ENCODE measurements at regions of chr13 and their contacts with region 1.

Region 1: DNA sequence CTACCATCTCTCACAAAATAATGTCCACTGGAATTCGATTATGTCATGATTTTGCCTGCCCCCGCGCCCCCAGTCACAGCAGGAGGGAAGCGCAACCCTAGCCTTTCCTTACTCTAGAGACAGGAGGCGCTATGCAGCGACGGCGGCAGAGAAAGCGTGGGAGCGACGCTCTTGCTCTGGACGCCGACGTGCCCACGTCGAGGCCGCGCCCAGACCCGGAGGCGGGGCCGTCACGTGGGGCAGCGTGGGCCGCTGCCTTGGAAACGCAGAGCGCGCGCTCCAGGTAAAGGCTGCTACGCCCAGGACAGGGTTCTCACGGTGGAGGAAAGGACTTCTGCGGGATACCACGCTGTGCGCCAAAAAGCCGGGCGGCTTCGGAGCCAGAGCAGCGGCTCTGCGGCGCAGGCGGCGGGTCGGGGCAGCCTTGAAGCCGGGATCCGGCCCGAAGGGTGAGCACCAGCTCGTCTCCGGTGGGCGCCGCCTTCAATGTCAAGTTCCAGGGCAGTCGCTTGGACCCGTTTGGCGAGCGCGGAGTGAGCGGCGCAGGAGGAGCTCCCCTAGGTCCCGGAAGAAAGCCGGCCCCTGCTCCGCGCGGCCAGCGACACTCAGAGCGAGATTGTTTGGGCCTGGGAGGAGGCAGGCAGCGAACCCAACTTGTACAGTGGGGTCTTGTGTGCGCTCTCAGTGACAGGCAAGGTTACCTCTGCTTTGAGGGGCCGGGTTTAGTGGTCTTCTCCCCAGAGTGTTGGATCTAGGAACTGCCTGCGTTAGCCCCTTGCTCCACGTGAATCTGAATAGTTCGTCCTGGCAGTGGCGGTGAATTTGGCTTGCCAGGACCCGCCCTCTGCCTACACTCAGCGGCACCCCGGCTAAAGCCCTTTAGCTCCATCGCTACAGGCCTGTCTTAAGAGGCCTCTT is 121.7 kb downstream of the MRPL57 start:
- DNase-seq: peak; percentile 91
- H3K4me3 Mint-ChIP-seq: peak overlapping the region; percentile 87
- H3K27ac Mint-ChIP-seq: peak overlapping the region; percentile 59
- H3K4me1 Mint-ChIP-seq: peaks cover 25% of the 10 kb centered on the region
- H3K27me3 Mint-ChIP-seq: no peaks in the 10 kb centered on the region

Region 2: GRCh38 chr13:21115231-21115630 is 182.9 kb before region 1 on chr13:
- CTCF ChIA-PET with region 1: no interaction called
- POLR2A ChIA-PET with region 1: no interaction called
- intact Hi-C with region 1: loop called (anchors 10 kb)
- DNase-seq: no peak
- H3K4me3 Mint-ChIP-seq: no peak overlapping the region
- H3K27ac Mint-ChIP-seq: no peak overlapping the region
- H3K4me1 Mint-ChIP-seq: no peaks in the 10 kb centered on the region
- H3K27me3 Mint-ChIP-seq: no peaks in the 10 kb centered on the region

Region 3: DNA sequence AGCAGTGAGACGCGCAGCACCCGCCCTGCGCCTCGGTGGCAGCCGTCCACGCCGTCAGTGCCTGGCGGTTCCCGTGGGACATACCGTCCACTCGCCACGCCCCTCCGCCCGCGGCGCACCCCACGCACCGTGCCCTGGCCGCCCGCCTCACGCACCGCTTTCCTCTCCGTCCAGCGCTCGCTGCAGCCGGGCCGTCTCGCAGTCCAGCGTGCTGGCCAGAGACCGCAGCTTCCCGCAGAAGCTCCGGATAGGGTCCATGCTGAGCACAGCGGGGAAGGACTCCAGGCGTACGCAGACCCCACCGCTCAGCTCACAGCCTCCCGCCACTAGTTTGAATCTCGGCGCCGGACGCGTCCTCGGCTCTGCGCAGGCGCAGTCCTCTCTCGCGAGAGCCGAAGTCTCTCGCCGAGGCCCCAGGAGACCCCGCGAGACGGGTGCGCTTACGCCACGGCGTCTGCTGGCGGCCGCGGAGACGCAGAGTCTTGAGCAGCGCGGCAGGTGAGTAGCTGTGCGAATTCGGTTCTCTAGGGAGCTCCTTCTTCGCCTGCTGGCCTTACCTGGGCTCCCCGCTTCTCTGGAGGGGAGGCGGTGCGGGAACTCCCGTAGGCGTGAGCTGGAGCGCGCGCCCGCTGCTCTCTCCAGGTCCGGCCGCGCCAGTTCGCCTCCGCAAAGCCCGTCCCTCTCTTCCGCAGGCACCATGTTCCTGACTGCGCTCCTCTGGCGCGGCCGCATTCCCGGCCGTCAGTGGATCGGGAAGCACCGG is 121.8 kb before region 1 on chr13 and contains the starts of genes MRPL57 and SKA3:
- CTCF ChIA-PET with region 1: interaction called, 9 read pairs
- POLR2A ChIA-PET with region 1: no interaction called
- intact Hi-C with region 1: loop called (anchors 1 kb)
- DNase-seq: peak; percentile 96
- H3K4me3 Mint-ChIP-seq: peak within 1 kb of the TSS; percentile 99
- H3K27ac Mint-ChIP-seq: peak within 1 kb of the TSS; percentile 96
- H3K4me1 Mint-ChIP-seq: peaks cover 18% of the 10 kb centered on the region
- H3K27me3 Mint-ChIP-seq: no peaks in the 10 kb centered on the region
- total RNA-seq, gene MRPL57: 20.8 to 23.1 TPM
- total RNA-seq, gene SKA3: 34.0 to 36.2 TPM

Region 4: DNA sequence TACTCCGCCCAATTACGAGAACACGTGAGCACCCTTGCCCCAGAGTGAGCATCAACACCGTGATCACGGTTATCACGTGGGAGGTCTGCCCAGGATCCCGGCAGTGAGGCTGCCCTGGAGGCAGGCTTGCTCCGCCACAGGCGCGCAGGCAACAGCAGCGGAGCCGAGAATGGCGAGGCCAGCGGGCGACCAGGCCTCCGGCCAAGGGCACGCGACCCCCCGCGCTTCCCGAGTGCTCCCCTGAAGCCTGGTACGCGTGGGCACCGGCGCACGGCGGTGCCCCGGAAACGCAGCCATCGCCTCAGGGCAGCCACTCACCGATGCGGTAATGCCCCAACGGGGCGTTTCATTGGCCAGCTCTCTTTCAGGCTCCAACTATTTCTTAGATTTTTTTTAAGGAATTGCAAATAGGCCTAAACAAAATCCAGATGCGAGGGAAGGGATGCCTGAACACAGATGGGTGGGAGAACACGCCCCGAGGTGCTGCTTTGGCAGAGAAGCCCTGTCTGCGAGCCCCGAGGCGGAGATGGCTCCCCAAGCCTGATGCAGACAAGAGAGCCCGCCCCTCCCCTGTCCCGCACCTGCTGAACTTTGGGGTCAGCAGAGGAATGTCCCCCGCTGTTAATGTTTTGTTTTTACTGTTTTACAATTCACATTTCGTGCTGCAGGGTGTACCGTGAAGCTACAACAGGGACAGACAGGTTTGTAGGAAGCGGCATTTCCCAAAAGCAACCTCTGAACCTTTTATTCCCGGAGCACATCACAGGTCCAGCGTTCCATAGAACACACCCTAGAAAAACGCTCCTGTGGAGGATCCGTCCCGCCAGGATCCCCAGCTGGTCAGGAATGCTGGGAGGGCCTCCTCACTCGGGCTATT is 28.2 kb after region 1 on chr13:
- CTCF ChIA-PET with region 1: interaction called, 20 read pairs
- POLR2A ChIA-PET with region 1: no interaction called
- intact Hi-C with region 1: loop called (anchors 1 kb)
- DNase-seq: peak; percentile 40
- H3K4me3 Mint-ChIP-seq: peak overlapping the region; percentile 44
- H3K27ac Mint-ChIP-seq: no peak overlapping the region
- H3K4me1 Mint-ChIP-seq: peaks cover 43% of the 10 kb centered on the region
- H3K27me3 Mint-ChIP-seq: no peaks in the 10 kb centered on the region

Region 5: DNA sequence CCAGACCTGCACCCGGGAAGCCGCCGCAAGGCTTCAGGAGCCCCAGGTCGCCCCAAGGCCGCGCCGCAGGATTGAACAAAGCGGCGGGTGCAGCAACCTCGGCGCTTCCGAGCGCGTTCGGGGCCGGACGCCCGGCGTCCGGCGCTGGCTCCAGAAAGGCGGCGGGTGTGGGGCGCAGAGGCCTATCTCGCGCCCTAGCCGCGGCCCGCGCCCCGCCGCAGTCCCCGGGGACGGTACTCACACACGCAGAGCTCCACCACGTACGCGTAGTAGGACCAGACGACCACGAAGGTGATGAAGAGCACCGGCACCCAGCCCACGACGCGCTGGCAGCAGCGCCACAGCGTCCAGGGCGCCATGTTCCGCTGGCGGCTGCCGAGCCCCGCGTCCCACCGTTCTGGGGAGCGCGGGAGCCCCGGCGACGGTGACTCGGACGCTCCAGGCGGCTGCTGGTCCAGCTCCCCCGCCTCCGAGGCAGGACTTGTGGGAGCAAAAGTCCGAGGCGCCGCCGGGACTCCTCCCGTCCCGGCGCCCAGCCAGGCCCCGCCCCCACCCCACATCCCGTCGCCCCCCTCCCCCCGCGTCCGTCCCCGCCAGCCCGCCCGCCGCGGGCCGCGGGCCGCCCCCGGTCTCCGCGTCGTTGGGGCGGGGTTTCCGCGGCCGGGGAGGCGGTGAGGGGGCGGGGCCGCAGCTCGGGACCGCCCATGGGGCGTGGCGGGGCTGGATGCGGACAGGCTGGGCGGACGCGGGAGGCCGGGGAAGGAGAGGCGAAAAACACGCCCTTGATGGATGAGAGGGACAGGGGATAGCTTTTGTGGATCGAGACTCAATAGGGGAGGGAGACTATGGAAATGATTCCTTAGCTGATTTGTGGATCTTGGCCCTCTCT is 160.9 kb after region 1 on chr13 and contains the start of gene ZDHHC20:
- CTCF ChIA-PET with region 1: interaction called, 20 read pairs
- POLR2A ChIA-PET with region 1: interaction called, 13 read pairs
- intact Hi-C with region 1: loop called (anchors 1 kb)
- DNase-seq: peak; percentile 93
- H3K4me3 Mint-ChIP-seq: peak within 1 kb of the TSS; percentile 93
- H3K27ac Mint-ChIP-seq: peak within 1 kb of the TSS; percentile 90
- H3K4me1 Mint-ChIP-seq: peaks cover 29% of the 10 kb centered on the region
- H3K27me3 Mint-ChIP-seq: no peaks in the 10 kb centered on the region
- total RNA-seq, gene ZDHHC20: 53.5 to 60.6 TPM

Region 6: DNA sequence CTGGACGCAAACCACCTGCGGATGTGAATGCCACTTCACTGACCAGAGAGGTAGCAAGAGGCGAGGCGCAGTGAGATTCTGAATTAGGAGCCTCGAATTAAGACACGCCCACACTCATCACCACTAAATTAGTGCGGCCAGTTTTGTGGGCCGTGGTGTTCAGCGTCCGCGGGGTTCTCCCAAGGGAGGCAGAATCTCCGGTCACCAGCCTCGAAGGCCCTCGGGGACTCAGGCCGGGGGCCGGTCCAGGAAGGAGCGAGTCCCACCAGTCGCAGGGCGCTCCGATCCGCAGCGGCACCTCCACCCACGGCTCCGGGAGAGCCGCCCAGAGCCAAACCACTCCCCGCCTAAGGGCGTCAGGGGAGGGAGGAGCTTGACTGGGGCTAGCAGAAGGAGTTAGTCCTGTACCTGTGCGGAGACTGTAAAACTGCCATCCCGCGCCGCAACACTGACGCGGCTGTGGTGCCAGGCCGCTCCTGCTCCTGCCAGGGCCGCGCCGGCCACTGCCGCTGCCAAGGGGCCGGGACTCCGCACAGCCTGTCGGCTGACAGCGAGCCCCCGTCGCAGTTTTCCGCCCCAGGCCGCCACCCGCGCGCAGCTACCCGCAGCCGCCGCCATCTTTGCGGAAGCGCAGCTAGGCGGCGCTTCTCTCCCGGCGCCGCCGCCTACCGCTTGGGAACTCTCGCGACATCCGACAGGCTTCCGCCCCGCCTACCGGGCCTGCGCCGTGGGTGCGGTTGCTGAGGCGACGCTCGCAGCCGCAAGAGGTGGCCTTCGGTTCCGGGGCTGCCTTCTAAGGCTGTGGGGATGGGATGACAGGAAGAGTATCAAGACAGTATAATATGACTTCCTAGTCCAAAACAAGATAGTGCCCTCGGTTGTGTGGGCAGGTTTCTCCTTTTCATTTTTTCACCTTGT is 305.6 kb after region 1 on chr13 and contains the start of gene MICU2:
- CTCF ChIA-PET with region 1: interaction called, 5 read pairs
- POLR2A ChIA-PET with region 1: no interaction called
- intact Hi-C with region 1: loop called (anchors 1 kb)
- DNase-seq: peak; percentile 97
- H3K4me3 Mint-ChIP-seq: peak within 1 kb of the TSS; percentile 81
- H3K27ac Mint-ChIP-seq: peak within 1 kb of the TSS; percentile 89
- H3K4me1 Mint-ChIP-seq: peaks cover 26% of the 10 kb centered on the region
- H3K27me3 Mint-ChIP-seq: peaks cover 5% of the 10 kb centered on the region
- total RNA-seq, gene MICU2: 32.6 to 33.3 TPM